ENCODE measurements at regions of chr15 and their contacts with region 1.

Region 1: DNA sequence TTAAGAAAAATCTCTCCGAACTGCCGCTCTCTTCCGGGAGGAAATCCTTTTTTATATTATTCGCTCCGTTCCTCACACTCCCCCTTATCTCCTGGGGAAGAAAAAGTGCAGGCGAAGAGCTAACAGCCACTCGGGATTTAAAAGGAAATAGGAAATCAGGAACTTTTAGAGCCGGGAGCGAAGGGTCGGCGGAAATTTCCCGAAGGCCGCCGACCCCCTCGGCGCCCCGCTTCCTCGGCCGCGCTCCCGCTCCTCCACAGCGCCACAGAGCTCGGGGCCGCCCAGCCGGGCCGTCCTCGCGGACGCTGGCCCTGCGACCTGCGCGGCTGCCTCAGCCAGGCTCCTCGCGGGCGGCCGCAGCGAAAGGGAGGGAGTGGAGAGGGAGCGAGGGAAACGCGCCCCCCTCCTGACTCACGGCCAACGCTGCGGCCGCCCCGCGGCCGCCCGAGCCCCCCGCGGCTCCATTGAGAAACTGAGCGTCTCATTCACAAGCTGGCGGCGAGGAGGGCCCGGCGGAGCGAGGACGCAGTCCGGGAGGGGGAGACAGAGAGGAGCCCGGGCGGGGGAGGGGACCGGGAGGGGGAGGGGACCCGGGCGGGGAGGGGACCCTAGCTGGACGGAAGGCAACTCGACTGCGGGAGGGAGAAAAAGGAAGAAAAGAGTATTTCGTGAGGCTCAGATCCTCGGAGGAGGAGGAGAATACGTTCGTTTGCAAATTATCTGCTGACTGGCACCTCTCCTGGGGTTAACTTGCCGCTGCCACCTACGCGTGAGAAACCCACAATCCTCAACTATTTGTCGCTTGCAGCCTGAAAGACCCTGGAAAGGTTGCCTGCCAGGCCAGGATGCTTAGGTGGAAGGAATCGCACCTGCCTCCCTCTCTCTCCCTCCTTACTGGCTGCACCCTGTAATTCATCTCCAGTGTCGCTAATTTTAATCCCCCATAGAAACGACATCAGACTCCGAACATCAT is at the start of gene PTPN9:
- DNase-seq: peak in 1 of 2 donors; percentile 86
- H3K4me3 ChIP-seq: peak within 1 kb of the TSS; percentile 94 to 97
- H3K27ac ChIP-seq: peak within 1 kb of the TSS; percentile 85 to 88
- H3K4me1 ChIP-seq: peaks cover 4 to 7% of the 10 kb centered on the region in 2 donors
- H3K27me3 ChIP-seq: no peaks in the 10 kb centered on the region
- CTCF ChIP-seq: peak in 2 of 3 experiments; percentile 54 to 77
- total RNA-seq, gene PTPN9: 7.1 TPM

Region 2: GRCh38 chr15:75508840-75509532 is 70.2 kb before region 1 on chr15:
- intact Hi-C with region 1: loop called (anchors 2 kb)
- DNase-seq: no peak
- H3K4me3 ChIP-seq: no peak overlapping the region
- H3K27ac ChIP-seq: no peak overlapping the region
- H3K4me1 ChIP-seq: no peaks in the 10 kb centered on the region
- H3K27me3 ChIP-seq: no peaks in the 10 kb centered on the region
- CTCF ChIP-seq: peak in 2 of 3 experiments; percentile 28 to 46

Region 3: GRCh38 chr15:75532413-75533147 is 46.7 kb before region 1 on chr15:
- intact Hi-C with region 1: loop called (anchors 5 kb)
- DNase-seq: peak; percentile 13 to 83
- H3K4me3 ChIP-seq: no peak overlapping the region
- H3K27ac ChIP-seq: peak overlapping the region; percentile 47 to 75
- H3K4me1 ChIP-seq: peaks cover 12 to 26% of the 10 kb centered on the region in 2 donors
- H3K27me3 ChIP-seq: no peaks in the 10 kb centered on the region
- CTCF ChIP-seq: peak; percentile 17 to 28 (median 20)

Region 4: DNA sequence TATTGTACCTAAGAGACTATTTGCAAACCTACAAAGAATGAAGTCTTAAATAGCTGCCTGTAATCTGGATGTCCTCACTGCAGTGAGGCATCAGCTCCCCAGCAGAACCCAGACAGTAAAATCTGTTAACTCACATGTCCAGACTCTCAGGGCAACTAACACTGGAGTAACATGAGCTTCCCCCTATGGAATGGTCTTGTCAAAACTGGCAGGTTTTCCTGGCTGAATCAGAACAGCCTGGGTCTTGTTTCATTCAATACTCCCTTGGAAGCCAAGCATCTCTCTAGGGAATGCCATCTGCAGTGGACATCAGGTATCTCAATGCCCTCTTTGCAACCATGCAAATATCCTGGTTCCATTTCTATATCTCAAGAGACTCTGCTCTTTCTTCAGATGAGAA is 24.5 kb before region 1 on chr15:
- intact Hi-C with region 1: no loop called
- DNase-seq: no peak
- H3K4me3 ChIP-seq: no peak overlapping the region
- H3K27ac ChIP-seq: no peak overlapping the region
- H3K4me1 ChIP-seq: no peaks in the 10 kb centered on the region
- H3K27me3 ChIP-seq: no peaks in the 10 kb centered on the region
- CTCF ChIP-seq: no peak

Region 5: GRCh38 chr15:75639709-75640482 is 60.7 kb after region 1 on chr15 and contains the start of gene IMP3:
- intact Hi-C with region 1: no loop called
- DNase-seq: peak; percentile 84 to 97
- H3K4me3 ChIP-seq: peak within 1 kb of the TSS; percentile 82 to 94
- H3K27ac ChIP-seq: peak within 1 kb of the TSS; percentile 88 to 95
- H3K4me1 ChIP-seq: peaks cover 9 to 32% of the 10 kb centered on the region in 2 donors
- H3K27me3 ChIP-seq: no peaks in the 10 kb centered on the region
- CTCF ChIP-seq: no peak
- total RNA-seq, gene IMP3: 159 TPM

Region 6: GRCh38 chr15:75684642-75685041 is 105.4 kb after region 1 on chr15:
- intact Hi-C with region 1: loop called (anchors 5 kb)
- DNase-seq: no peak
- H3K4me3 ChIP-seq: no peak overlapping the region
- H3K27ac ChIP-seq: peak overlapping the region in 1 of 2 donors; percentile 18
- H3K4me1 ChIP-seq: peaks cover 0 to 9% of the 10 kb centered on the region in 2 donors
- H3K27me3 ChIP-seq: no peaks in the 10 kb centered on the region
- CTCF ChIP-seq: no peak